ENCODE measurements at regions of chr1 and their contacts with region 1.

Region 1: DNA sequence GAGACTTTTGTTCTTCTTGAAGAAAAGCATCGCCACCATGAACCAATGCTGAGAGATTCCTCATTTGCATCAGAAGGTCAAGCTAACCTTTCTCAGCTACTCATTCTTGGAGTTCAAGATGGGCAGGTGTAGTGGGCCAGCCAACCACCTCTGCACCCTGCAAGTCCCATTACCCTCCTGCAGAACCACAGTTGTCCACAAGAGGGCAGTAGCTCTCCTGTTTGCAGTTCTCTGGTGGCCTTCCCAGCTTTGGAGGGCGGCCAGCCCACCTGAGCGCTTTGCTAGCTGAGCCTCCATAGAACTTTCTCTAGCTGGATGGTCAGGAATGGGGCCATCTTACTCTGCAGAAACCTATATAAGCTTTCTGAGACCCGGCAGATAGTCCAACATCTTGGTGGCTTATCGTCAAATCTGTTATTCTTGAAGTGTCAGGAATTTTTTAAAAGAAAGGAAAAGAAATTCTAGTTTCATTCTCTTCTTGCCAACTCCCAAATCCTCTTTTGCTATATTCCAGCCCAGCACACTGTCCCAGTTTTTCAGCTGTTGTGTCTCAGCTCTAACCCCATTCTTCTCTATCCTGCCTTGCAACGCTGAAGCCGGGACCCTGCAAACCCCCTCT is 11.0 kb upstream of the LMX1A start:
- DNase-seq: peak; percentile 75
- H3K4me3 Mint-ChIP-seq: no peak overlapping the region
- H3K27ac Mint-ChIP-seq: no peak overlapping the region
- H3K4me1 Mint-ChIP-seq: peaks cover 4% of the 10 kb centered on the region
- H3K27me3 Mint-ChIP-seq: peaks cover 62% of the 10 kb centered on the region

Region 2: DNA sequence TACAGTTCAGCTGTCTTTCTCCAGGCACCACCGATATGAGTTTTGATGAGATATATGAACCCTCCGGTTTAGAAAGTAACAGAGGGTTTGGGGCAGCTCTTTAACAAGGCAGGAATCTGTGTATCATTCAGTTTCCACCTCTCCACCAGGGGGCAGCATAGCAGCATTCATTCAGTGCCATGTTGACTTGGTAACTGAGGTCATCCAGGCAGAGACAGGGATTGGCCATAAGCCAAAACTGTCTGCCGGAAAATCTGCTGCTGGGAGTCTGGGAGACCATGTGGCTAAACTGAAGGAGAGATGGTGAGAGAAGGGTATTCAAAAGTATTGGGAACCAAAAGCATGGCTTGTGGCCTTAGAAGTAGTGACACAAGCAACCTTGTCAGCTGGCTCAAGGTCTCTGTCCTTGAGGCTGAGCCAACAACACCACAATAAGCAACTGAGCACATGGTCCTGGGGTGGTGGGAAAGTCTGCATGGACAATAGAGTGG is 109.5 kb before region 1 on chr1:
- CTCF ChIA-PET with region 1: interaction called, 15 read pairs
- POLR2A ChIA-PET with region 1: no interaction called
- DNase-seq: peak; percentile 55
- H3K4me3 Mint-ChIP-seq: no peak overlapping the region
- H3K27ac Mint-ChIP-seq: no peak overlapping the region
- H3K4me1 Mint-ChIP-seq: no peaks in the 10 kb centered on the region
- H3K27me3 Mint-ChIP-seq: peaks cover 7% of the 10 kb centered on the region

Region 3: DNA sequence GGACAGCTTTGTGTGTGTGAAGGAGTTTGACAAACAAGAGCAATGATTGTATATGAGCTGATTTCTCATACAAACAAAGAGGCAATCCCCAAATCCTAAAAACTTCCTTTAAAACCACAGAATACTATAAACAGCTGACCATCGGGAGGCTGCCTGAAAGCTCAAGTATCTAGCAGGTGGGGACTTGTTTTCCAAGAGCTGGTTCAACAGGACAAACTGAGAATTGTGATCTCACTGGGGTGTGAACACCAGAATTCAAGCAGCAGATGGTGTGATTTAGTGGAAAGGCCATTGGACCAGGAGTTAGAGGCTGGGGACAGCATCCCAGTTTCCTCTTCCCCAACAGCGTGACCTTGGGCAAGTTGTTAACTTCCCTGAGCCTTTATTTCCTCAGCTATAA is 24.9 kb before region 1 on chr1:
- CTCF ChIA-PET with region 1: interaction called, 20 read pairs
- POLR2A ChIA-PET with region 1: no interaction called
- DNase-seq: no peak
- H3K4me3 Mint-ChIP-seq: no peak overlapping the region
- H3K27ac Mint-ChIP-seq: no peak overlapping the region
- H3K4me1 Mint-ChIP-seq: no peaks in the 10 kb centered on the region
- H3K27me3 Mint-ChIP-seq: peaks cover 52% of the 10 kb centered on the region

Region 4: GRCh38 chr1:165352442-165353293 is 14.8 kb before region 1 on chr1:
- CTCF ChIA-PET with region 1: interaction called, 23 read pairs
- POLR2A ChIA-PET with region 1: no interaction called
- DNase-seq: no peak
- H3K4me3 Mint-ChIP-seq: no peak overlapping the region
- H3K27ac Mint-ChIP-seq: no peak overlapping the region
- H3K4me1 Mint-ChIP-seq: peaks cover 3% of the 10 kb centered on the region
- H3K27me3 Mint-ChIP-seq: peaks cover 87% of the 10 kb centered on the region

Region 5: GRCh38 chr1:165383067-165383466 is 15.6 kb after region 1 on chr1:
- CTCF ChIA-PET with region 1: interaction called, 40 read pairs
- POLR2A ChIA-PET with region 1: no interaction called
- DNase-seq: no peak
- H3K4me3 Mint-ChIP-seq: no peak overlapping the region
- H3K27ac Mint-ChIP-seq: no peak overlapping the region
- H3K4me1 Mint-ChIP-seq: no peaks in the 10 kb centered on the region
- H3K27me3 Mint-ChIP-seq: peaks cover 59% of the 10 kb centered on the region

Region 6: GRCh38 chr1:165392634-165393571 is 25.4 kb after region 1 on chr1:
- CTCF ChIA-PET with region 1: interaction called, 52 read pairs
- POLR2A ChIA-PET with region 1: no interaction called
- DNase-seq: peak; percentile 95
- H3K4me3 Mint-ChIP-seq: peak overlapping the region; percentile 59
- H3K27ac Mint-ChIP-seq: peak overlapping the region; percentile 68
- H3K4me1 Mint-ChIP-seq: peaks cover 26% of the 10 kb centered on the region
- H3K27me3 Mint-ChIP-seq: peaks cover 87% of the 10 kb centered on the region

Region 7: GRCh38 chr1:165612062-165612461 is 244.6 kb after region 1 on chr1:
- CTCF ChIA-PET with region 1: no interaction called
- POLR2A ChIA-PET with region 1: no interaction called
- DNase-seq: no peak
- H3K4me3 Mint-ChIP-seq: no peak overlapping the region
- H3K27ac Mint-ChIP-seq: no peak overlapping the region
- H3K4me1 Mint-ChIP-seq: no peaks in the 10 kb centered on the region
- H3K27me3 Mint-ChIP-seq: peaks cover 38% of the 10 kb centered on the region